ENCODE measurements at regions of chr10 and their contacts with region 1.

Region 1: GRCh38 chr10:19819419-19820033 is 3.3 kb downstream of the PLXDC2 start:
- DNase-seq: peak; percentile 32
- H3K4me3 ChIP-seq: peak overlapping the region in 1 of 4 donors; percentile 64
- H3K27ac ChIP-seq: peak overlapping the region; percentile 77 to 91 (median 88)
- H3K4me1 ChIP-seq: peaks cover 0 to 34% (median 15%) of the 10 kb centered on the region in 4 donors
- H3K27me3 ChIP-seq: no peaks in the 10 kb centered on the region
- CTCF ChIP-seq: peak; percentile 77 to 90 (median 83)
- EP300 ChIP-seq: no peak
- POLR2A ChIP-seq: no peak

Region 2: GRCh38 chr10:20768843-20769242 is 949.3 kb after region 1 on chr10:
- in situ Hi-C with region 1: loop called in 3 of 4 experiments (anchors 10 to 25 kb)
- intact Hi-C with region 1: no loop called
- DNase-seq: no peak
- H3K4me3 ChIP-seq: no peak overlapping the region
- H3K27ac ChIP-seq: no peak overlapping the region
- H3K4me1 ChIP-seq: no peaks in the 10 kb centered on the region
- H3K27me3 ChIP-seq: no peaks in the 10 kb centered on the region
- CTCF ChIP-seq: peak in 4 of 5 experiments; percentile 22 to 34 (median 30)
- EP300 ChIP-seq: no peak
- POLR2A ChIP-seq: no peak

Region 3: DNA sequence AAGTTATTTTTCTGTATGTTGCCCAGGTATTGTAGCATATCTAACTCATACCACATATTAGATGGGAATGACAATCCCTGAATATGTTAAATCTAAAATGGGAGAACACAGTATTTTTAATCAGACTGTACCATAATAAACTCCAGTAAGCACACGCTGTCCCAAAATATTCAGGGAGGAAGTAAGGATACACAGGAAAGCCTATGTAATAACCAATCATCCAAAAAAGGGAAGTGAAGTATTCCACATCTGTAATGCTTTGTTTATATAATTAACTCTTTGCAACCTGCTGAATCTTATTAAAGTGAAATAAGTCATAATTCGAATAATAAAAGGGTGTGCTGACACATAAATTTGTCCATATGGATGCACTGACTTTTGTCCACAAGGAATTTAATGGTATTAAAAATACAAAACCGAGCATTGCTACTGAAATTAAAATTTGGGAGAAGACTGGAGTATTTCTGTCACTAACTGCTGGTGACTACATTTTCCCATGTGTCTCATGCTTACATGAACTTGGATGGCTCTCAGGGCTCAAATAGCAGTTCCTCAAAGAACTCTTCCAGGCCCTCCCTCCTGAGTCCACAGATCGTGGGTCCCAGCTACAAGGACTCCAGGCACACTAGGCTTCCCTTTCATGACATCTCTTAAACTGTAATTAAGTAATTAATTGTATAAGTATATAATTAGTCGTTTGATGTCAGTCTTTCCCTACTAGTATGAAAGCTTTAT is 957.0 kb after region 1 on chr10:
- in situ Hi-C with region 1: loop called in 3 of 4 experiments (anchors 10 to 25 kb)
- intact Hi-C with region 1: no loop called
- DNase-seq: no peak
- H3K4me3 ChIP-seq: no peak overlapping the region
- H3K27ac ChIP-seq: no peak overlapping the region
- H3K4me1 ChIP-seq: no peaks in the 10 kb centered on the region
- H3K27me3 ChIP-seq: no peaks in the 10 kb centered on the region
- CTCF ChIP-seq: no peak
- EP300 ChIP-seq: no peak
- POLR2A ChIP-seq: no peak